ENCODE measurements at regions of chr18 and their contacts with region 1.

Region 1: GRCh38 chr18:22813648-22814328 is 119.3 kb upstream of the RBBP8 start:
- DNase-seq: no peak
- H3K4me3 ChIP-seq: no peak overlapping the region
- H3K27ac ChIP-seq: no peak overlapping the region
- H3K27me3 ChIP-seq: peaks cover 5% of the 10 kb centered on the region
- CTCF ChIP-seq: peak; percentile 84

Region 2: GRCh38 chr18:22838639-22839277 is 25.0 kb after region 1 on chr18:
- CTCF ChIA-PET with region 1: interaction called, 10 read pairs
- POLR2A ChIA-PET with region 1: no interaction called
- DNase-seq: no peak
- H3K4me3 ChIP-seq: no peak overlapping the region
- H3K27ac ChIP-seq: peak overlapping the region; percentile 40
- H3K27me3 ChIP-seq: no peaks in the 10 kb centered on the region
- CTCF ChIP-seq: no peak

Region 3: DNA sequence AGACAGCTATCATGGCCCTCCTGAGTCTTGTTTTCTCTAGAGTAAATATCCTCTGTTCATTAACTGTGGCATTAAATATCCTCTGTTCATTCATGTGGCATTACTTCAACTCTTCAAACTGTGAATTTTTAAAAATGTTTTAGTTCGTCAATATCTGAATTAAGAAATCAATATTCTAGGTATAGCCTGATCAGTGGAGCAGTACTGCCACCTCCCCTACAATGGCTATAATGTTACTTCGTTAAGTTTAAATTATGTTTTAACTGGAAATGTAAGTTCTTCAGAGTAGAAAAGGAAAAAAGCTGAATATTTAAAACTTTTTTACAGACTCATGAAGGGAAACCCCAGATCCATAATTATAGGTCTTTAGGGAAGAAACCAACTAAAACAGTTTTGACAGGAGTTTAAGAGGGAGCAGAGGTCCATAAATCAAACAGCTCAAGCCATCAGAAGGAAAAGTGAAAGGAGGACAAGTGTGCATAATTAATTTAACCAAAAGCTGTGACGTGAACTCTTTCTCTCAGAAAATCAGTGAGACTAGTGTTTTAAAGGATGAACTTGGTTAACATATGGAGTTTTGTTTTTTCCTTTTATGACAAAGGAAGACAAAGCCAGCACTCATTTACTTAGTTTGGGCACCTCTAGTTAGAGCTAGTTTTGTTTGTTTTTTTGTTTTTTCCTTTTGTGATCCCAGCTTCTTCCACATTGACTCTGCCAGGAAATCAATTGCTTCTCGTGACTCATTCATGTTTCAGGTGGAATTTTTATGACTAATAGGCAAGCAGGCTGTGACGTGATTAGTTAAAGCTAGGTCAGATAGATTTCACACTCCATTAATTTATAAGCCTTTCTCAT is 164.3 kb after region 1 on chr18:
- CTCF ChIA-PET with region 1: interaction called, 94 read pairs
- POLR2A ChIA-PET with region 1: no interaction called
- DNase-seq: peak; percentile 27
- H3K4me3 ChIP-seq: no peak overlapping the region
- H3K27ac ChIP-seq: no peak overlapping the region
- H3K27me3 ChIP-seq: no peaks in the 10 kb centered on the region
- CTCF ChIP-seq: no peak

Region 4: GRCh38 chr18:22983175-22983574 is 169.4 kb after region 1 on chr18:
- CTCF ChIA-PET with region 1: interaction called, 94 read pairs
- POLR2A ChIA-PET with region 1: interaction called, 3 read pairs
- DNase-seq: peak; percentile 8
- H3K4me3 ChIP-seq: no peak overlapping the region
- H3K27ac ChIP-seq: no peak overlapping the region
- H3K27me3 ChIP-seq: no peaks in the 10 kb centered on the region
- CTCF ChIP-seq: peak; percentile 62